ENCODE measurements at regions of chr7 and their contacts with region 1.

Region 1: GRCh38 chr7:140229591-140230515 is 53.1 kb upstream of the KDM7A start:
- DNase-seq: no peak
- H3K4me3 ChIP-seq: peak overlapping the region; percentile 36
- CTCF ChIP-seq: peak in 1 of 3 donors; percentile 91
- POLR2A ChIP-seq: no peak

Region 2: DNA sequence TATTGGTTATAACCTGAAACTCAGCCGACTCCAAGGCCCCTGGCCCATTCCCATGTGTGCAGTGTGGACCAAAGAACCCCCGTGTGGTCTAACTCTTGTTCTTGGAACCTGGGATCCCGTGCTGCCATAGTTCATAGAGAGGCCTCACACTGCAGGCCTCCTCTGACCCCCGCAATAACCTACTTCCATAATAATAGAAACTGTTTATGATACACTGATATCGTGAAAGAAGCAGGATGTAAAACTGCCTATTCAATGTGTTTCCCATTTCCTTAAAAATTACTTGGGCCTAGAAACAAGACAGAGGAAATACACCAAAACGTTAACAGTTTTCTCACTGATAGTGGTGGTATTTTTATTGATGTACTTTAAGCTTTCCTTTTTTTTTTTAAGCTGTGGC is 56.1 kb after region 1 on chr7:
- intact Hi-C with region 1: no loop called
- DNase-seq: no peak
- H3K4me3 ChIP-seq: no peak overlapping the region
- CTCF ChIP-seq: no peak
- POLR2A ChIP-seq: no peak

Region 3: DNA sequence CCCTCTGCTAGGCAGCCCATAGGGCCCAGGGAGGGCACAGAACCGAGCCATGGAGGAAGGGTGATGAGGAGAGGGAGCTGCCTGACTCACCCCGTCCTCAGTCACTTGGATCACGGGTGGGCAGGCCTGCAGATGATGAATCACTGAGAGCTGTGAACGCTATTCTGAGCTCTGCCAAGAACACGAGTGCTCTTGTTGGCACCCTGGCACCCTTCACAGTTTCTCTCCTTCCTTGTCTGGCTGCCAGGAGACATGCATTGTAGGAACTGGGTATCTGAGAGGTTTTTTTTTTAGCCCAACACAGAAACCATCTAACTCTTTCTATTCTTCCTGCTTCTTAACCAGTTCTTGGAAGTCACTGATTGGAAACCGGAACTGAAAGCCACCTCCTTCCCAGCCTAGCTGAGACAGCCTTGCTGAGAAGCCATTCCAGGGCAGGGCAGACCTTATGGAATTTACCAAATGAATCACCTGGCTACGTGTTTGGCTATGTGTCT is 86.4 kb after region 1 on chr7:
- intact Hi-C with region 1: loop called (anchors 10 kb)
- DNase-seq: peak; percentile 85 to 95
- H3K4me3 ChIP-seq: no peak overlapping the region
- CTCF ChIP-seq: no peak
- POLR2A ChIP-seq: no peak

Measured in lower leg skin (tissue), 4 donors.